ENCODE measurements at regions of chr1 and their contacts with region 1.

Region 1: GRCh38 chr1:65332821-65333220 is 23.5 kb downstream of the DNAJC6 start:
- DNase-seq: no peak
- H3K4me3 ChIP-seq: no peak overlapping the region
- H3K27ac ChIP-seq: no peak overlapping the region
- H3K4me1 ChIP-seq: no peaks in the 10 kb centered on the region
- H3K27me3 ChIP-seq: no peaks in the 10 kb centered on the region
- CTCF ChIP-seq: no peak

Region 2: DNA sequence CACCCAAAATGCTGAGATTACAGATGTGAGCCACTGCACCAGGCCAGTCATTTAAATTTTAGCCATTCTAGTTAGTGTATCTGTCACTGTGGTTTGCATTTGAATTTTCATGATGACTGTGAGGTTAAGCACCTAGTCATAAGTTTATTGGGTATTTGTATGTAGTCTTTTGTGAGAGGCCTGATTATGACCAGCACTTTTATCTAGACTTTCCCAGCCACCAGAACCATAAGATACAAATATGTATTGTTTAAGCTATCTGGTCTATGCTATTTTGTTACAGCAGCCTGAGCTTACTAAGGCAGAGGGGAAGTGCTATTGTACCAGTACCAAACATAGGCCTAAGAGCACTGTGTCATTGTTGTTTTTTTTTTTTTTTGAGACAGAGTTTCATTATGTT is 43.4 kb before region 1 on chr1:
- CTCF ChIA-PET with region 1: no interaction called
- POLR2A ChIA-PET with region 1: interaction called, 24 read pairs
- intact Hi-C with region 1: no loop called
- DNase-seq: no peak
- H3K4me3 ChIP-seq: no peak overlapping the region
- H3K27ac ChIP-seq: no peak overlapping the region
- H3K4me1 ChIP-seq: no peaks in the 10 kb centered on the region
- H3K27me3 ChIP-seq: no peaks in the 10 kb centered on the region
- CTCF ChIP-seq: no peak